CD4-positive, alpha-beta T cell (primary cell): ENCODE measurements at regions of chr3 and their contacts with region 1.

Region 1: DNA sequence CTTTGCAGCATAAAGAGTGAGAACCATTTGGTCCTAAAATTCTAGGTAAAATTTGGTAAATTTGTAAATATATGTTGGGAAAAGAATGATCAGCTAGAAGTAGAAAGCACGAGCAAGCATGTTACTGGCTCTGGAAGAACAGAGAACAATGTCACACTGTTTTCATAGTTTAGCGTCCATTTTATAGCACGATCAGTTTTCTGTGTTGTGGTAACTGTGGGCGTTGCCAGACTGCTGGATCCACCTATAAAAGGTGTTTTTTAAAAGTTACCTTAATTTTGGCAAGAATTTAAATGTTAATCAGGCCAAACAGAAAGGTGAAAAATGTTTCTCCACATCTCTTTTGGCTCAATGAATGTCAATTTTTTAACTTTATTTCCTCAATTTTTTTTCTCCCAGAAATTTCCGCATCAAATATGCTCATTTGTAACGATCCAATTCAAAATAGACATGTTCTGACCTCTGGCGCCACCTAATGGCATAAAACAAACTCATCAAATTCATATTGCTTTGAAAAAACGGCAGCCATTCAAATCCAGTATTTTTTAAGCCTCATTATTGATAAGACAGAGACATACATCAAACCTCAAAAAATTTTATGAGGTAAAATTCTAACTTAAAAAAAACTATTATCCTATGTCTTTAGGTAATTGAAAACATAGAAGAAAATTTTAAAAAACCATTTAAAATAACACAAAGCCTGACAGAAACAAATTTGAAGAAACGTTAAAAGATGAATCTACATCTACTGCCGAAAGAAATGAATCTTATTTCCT is 5.5 kb upstream of the GP5 start:
- DNase-seq: peak in 10 of 14 experiments; percentile 13 to 81 (median 28)
- ATAC-seq: peak; percentile 84
- H3K4me3 ChIP-seq: no peak overlapping the region
- H3K4me3 Mint-ChIP-seq: peak overlapping the region; percentile 6
- H3K27ac ChIP-seq: no peak overlapping the region
- H3K27ac Mint-ChIP-seq: no peak overlapping the region
- H3K4me1 ChIP-seq: peaks cover 4% of the 10 kb centered on the region
- H3K4me1 Mint-ChIP-seq: peaks cover 16% of the 10 kb centered on the region
- H3K27me3 ChIP-seq: no peaks in the 10 kb centered on the region
- H3K27me3 Mint-ChIP-seq: no peaks in the 10 kb centered on the region
- CTCF ChIP-seq: peak; percentile 90

Region 2: DNA sequence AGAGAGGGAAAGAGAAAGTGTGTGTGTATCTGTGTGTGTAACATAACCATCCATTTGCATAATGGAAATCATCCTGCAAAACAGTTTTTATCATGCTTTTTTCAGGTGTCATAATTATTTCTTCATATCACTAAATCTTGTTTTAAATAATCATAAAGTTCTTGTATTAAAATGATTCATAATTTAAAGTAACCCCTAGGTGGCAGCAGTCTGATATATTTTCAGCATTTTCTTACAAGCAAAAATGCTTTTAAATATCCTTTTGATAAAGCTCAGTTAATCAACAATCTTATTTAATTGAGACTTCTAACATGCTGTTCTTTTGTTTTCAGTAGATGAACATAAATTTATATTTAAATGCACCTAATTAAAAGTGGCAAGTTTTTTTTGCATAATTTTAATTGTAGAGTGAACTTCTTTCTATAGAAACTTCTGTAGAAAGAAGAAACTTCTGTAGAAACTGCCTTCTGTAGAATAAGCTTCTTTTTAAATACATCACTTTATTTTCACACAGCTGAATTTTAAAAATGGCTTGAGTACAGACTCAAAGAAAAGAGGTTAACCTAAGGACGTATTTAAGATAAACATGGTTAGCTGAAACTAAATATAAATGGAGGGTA is 739.1 kb before region 1 on chr3:
- CTCF ChIA-PET with region 1: no interaction called
- POLR2A ChIA-PET with region 1: no interaction called
- intact Hi-C with region 1: loop called in 1 of 2 experiments (anchors 5 kb)
- DNase-seq: peak in 3 of 14 experiments; percentile 39 to 55 (median 45)
- ATAC-seq: no peak
- H3K4me3 ChIP-seq: no peak overlapping the region
- H3K4me3 Mint-ChIP-seq: no peak overlapping the region
- H3K27ac ChIP-seq: no peak overlapping the region
- H3K27ac Mint-ChIP-seq: no peak overlapping the region
- H3K4me1 ChIP-seq: no peaks in the 10 kb centered on the region
- H3K4me1 Mint-ChIP-seq: no peaks in the 10 kb centered on the region
- H3K27me3 ChIP-seq: no peaks in the 10 kb centered on the region
- H3K27me3 Mint-ChIP-seq: no peaks in the 10 kb centered on the region
- CTCF ChIP-seq: peak; percentile 71